ENCODE measurements at regions of chr14 and their contacts with region 1.

Region 1: DNA sequence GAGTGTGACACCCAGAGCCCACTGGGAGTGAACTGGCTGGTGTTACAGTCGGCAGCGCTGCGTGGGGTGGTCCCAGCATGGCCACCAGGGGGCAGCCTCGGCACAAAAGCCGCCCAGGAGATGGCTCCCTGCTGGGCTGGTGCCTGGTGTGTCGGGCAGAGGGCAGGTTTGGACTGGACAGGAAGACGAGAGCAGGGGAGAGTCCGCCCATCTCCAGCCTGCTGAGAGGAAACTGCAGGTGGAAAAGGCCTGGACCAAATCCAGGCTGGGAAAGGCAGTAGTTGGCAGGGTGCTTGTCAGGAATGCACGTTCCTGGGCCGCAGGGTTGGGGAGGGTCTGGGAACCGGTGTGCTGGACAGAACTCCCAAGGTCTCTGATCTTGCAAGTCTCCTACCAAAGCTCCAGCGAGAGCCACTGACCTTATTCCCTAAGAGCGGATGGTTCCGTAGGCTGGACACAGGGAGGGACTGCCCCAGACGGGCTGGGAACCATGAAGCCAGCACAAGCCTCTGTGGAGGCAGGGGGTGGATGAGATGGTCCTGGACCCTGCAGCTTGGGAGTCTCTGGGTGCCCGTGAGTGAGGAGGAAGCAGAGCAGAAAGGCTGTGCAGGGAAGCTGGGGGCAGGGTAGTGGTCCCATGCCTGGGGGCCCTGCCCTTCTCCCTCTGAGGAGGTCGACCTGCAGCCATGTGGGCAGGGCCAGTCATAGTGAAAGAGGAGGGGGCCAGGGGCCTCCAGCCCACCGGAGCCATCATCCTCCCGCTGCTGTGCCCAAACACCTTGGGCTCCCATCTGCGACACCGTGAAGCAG is 1.8 kb downstream of the AHNAK2 start:
- DNase-seq: peak; percentile 88
- ATAC-seq: peak; percentile 6
- H3K4me3 ChIP-seq: peak overlapping the region; percentile 97
- H3K27ac ChIP-seq: no peak overlapping the region
- H3K4me1 ChIP-seq: peaks cover 71% of the 10 kb centered on the region
- H3K27me3 ChIP-seq: no peaks in the 10 kb centered on the region
- CTCF ChIP-seq: peak; percentile 85

Region 2: GRCh38 chr14:104895786-104896661 is 80.4 kb before region 1 on chr14:
- CTCF ChIA-PET with region 1: interaction called, 3 read pairs
- POLR2A ChIA-PET with region 1: no interaction called
- intact Hi-C with region 1: loop called (anchors 2 kb)
- DNase-seq: no peak
- ATAC-seq: peak; percentile 8; the same call in 1 of the 2 replicates
- H3K4me3 ChIP-seq: no peak overlapping the region
- H3K27ac ChIP-seq: no peak overlapping the region
- H3K4me1 ChIP-seq: no peaks in the 10 kb centered on the region
- H3K27me3 ChIP-seq: no peaks in the 10 kb centered on the region
- CTCF ChIP-seq: no peak

Region 3: GRCh38 chr14:104932676-104933631 is 43.4 kb before region 1 on chr14:
- CTCF ChIA-PET with region 1: interaction called, 7 read pairs
- POLR2A ChIA-PET with region 1: interaction called, 4 read pairs
- intact Hi-C with region 1: loop called (anchors 5 kb)
- DNase-seq: peak; percentile 93
- ATAC-seq: peak; percentile 81
- H3K4me3 ChIP-seq: peak overlapping the region; percentile 64
- H3K27ac ChIP-seq: no peak overlapping the region
- H3K4me1 ChIP-seq: no peaks in the 10 kb centered on the region
- H3K27me3 ChIP-seq: no peaks in the 10 kb centered on the region
- CTCF ChIP-seq: peak; percentile 46

Region 4: DNA sequence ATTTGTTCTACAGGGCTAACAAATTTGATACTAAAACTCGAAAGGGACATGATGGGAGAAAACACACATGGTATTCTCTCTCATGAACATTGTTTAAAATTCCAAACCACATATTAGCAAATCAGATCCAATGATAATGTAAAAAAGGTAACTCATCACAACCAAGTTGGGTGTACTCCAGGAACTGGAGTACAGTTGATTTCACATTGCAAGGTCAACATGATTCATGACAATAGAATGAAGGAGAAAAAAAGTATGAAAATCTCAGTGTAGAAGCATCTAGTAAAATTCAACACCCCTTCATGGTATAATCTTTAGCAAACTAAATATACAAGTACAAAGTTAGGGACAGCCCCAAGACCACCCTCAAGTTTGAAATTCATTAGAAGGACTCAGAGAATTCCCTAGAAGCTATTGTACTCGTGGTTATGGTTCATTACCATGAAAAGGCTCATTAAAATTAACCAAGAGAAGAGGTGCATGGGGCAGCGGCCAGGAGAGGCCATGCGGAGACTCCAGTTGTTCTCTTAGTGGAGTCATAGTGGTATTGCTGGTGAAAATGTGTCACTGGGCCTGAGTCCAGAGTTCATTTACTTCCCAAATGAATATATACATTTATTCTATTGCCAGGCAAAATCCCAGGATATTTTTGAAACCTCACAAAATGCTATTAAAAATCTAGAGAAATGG is 47.5 kb after region 1 on chr14:
- CTCF ChIA-PET with region 1: interaction called, 4 read pairs
- POLR2A ChIA-PET with region 1: interaction called, 8 read pairs
- intact Hi-C with region 1: loop called (anchors 1 kb)
- DNase-seq: peak; percentile 91
- ATAC-seq: no peak
- H3K4me3 ChIP-seq: peak overlapping the region; percentile 48
- H3K27ac ChIP-seq: peak overlapping the region; percentile 98
- H3K4me1 ChIP-seq: peaks cover 70% of the 10 kb centered on the region
- H3K27me3 ChIP-seq: no peaks in the 10 kb centered on the region
- CTCF ChIP-seq: no peak

Region 5: DNA sequence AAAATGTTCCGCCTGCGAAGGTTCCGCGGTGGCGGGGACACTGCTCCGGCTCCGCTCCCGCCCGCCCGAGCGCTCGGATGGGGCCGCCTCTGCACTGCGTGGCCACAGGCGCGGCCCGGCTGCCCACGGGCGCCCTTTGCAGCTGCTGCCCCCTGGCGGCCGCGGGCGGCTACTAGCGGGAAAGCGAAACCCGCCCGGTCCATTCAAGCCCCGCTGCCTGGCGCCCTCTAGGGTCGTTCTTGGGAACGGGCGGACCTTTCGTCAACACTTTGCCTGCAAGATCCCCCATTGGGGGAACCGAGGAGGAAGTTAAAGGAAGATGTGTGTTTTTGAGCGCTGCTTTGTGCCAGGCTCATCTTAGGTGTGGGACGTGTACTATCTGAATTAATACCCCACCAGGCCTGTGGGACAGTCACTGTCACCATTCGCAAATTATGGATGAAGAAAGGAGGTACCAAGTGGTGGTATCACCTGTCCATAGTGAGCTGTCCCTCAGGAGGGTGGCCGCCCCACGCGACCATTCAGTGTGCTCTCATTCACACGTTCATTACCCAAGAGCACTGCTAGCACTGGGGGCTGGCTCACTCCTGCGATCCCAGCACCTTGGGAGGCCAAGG is 69.4 kb after region 1 on chr14:
- CTCF ChIA-PET with region 1: interaction called, 4 read pairs
- POLR2A ChIA-PET with region 1: no interaction called
- intact Hi-C with region 1: loop called (anchors 1 kb)
- DNase-seq: peak; percentile 92
- ATAC-seq: peak; percentile 88
- H3K4me3 ChIP-seq: peak overlapping the region; percentile 14; the same call in 1 of the 2 replicates
- H3K27ac ChIP-seq: no peak overlapping the region
- H3K4me1 ChIP-seq: no peaks in the 10 kb centered on the region
- H3K27me3 ChIP-seq: no peaks in the 10 kb centered on the region
- CTCF ChIP-seq: peak; percentile 99

Measured in PC-3 (cell line).